Aorta (tissue), 5 donors: ENCODE measurements at regions of chr14 and their contacts with region 1.

Region 1: GRCh38 chr14:89618811-89619551 is 201.9 kb upstream of the FOXN3 start:
- DNase-seq: peak; percentile 85 to 91
- ATAC-seq: peak; percentile 85
- H3K4me3 ChIP-seq: peak overlapping the region; percentile 86 to 90
- H3K27ac ChIP-seq: peak overlapping the region in 1 of 2 donors; percentile 37
- H3K4me1 ChIP-seq: peaks cover 0 to 8% of the 10 kb centered on the region in 2 donors
- H3K27me3 ChIP-seq: no peaks in the 10 kb centered on the region

Region 2: DNA sequence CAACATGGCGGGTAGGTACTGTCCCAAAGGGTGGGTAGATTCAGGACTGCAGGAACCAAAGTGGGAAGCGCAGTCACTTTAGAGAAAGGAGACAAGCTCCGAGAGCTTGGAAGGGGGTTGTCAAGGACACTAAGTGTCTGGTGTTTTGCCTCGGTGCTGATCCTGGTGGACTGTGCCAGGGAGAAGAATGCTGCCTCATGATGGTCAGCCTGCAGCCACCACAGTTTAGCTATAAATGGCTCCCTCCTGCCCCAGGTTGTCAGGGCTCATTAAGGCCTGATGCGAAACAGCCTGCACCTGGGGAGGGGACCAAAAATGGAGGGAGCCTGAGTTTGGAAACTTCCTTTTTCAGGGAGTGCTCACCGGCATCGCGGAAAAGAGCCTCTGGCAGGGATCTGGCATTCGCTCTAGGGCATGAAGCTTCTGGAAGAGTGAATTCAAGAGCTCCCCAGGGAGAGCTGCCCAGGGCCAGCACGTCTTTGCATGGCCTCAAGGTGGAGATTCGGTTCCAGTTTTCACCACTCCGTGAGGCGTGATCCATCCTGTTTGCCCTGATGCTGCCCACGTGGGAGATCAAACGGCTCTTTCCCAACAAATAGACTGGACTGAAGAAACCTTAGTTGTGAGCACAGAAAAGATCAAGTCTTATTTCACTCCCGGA is 366.0 kb before region 1 on chr14:
- intact Hi-C with region 1: loop called in 1 of 2 experiments (anchors 10 kb)
- DNase-seq: peak; percentile 62 to 77
- ATAC-seq: peak; percentile 52
- H3K4me3 ChIP-seq: no peak overlapping the region
- H3K27ac ChIP-seq: no peak overlapping the region
- H3K4me1 ChIP-seq: peaks cover under 1 to 16% of the 10 kb centered on the region in 2 donors
- H3K27me3 ChIP-seq: no peaks in the 10 kb centered on the region

Region 3: DNA sequence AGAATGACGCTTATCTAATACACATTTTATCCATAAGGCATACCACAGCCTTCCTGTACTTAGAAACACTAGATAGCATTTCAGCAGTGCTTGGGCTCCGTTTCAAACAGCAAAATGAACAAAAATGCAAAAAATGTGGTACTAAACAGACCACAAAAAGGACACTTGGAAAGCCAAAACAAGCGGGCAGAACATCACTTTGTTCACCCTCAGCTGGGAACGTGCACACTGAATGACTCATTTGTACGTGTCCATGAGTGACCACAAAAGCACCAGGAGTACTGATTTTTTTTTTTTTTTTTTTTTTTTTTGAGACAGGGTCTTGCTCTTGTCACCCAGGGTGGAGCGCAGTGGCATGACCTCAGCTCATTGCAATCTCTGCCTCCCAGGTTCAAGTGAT is 193.1 kb before region 1 on chr14:
- intact Hi-C with region 1: loop called in 1 of 2 experiments (anchors 5 kb)
- DNase-seq: no peak
- ATAC-seq: no peak
- H3K4me3 ChIP-seq: no peak overlapping the region
- H3K27ac ChIP-seq: peak overlapping the region in 1 of 2 donors; percentile 60
- H3K4me1 ChIP-seq: no peaks in the 10 kb centered on the region
- H3K27me3 ChIP-seq: no peaks in the 10 kb centered on the region

Region 4: DNA sequence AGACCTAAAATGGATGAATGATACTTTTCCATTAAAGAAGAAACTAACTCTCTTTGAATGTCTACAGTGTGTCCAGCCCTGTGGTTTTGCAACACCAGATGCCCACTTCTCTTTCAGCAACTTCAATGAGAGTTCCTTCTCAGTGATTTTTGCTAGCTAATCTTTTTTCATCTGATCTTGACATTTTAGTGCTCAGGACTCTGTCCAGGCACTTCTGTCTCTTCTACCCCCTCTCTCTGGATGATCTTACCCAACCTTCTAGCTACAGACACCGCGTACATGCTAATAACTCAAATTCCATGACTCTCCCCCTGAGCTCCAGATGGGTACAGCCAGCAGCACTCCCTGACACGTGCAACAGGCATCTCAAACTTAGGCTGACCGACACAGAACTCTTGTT is 40.8 kb before region 1 on chr14:
- intact Hi-C with region 1: loop called in 1 of 2 experiments (anchors 5 kb)
- DNase-seq: no peak
- ATAC-seq: no peak
- H3K4me3 ChIP-seq: no peak overlapping the region
- H3K27ac ChIP-seq: peak overlapping the region in 1 of 2 donors; percentile 60
- H3K4me1 ChIP-seq: peaks cover 0 to 8% of the 10 kb centered on the region in 2 donors
- H3K27me3 ChIP-seq: no peaks in the 10 kb centered on the region

Region 5: DNA sequence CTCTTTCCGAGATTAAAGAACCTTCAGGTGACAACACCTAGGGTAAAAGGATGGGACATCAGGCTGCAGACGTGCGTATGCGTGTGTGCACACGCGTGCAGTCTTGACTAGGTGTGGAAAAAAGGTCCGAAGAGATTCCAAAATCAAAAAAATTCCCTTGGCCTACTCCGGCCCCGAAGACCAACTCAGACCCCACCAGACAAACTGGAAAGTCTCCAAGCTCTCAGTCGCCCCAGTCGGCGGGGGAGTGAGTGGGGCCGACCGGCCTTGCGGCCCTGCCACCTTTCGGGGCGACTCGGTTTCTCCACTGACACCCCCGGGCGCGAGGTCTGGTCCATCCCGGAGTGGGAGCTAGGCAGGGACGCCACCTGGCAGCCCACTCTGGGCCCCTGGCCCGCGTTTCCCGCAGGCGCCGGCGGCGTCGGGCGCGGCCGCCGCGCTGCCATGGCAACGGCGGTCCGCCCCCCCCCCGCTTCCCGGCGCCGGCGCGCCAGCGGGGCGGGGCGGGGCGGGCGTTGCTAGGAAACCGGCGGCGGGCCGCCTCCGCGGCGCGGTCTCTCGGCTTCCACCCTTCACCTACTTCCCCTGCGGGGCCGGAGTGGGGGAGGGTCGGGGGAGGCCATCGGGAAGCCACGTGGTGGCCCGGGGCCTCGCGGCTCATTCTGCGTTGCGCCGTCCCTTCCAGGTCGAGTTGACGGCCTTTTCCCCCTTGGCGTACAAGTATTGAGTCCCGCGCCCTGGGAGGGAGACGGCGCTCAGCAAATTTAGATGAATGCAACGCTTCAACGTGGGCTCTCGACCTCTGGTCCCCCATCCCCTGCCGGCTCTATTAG is 82.4 kb after region 1 on chr14:
- intact Hi-C with region 1: no loop called
- DNase-seq: peak; percentile 94 to 95
- ATAC-seq: peak; percentile 95
- H3K4me3 ChIP-seq: peak overlapping the region; percentile 5 to 11
- H3K27ac ChIP-seq: peak overlapping the region in 1 of 2 donors; percentile 31
- H3K4me1 ChIP-seq: no peaks in the 10 kb centered on the region
- H3K27me3 ChIP-seq: no peaks in the 10 kb centered on the region

Region 6: GRCh38 chr14:89813617-89814031 is 194.6 kb after region 1 on chr14:
- intact Hi-C with region 1: loop called in 1 of 2 experiments (anchors 10 kb)
- DNase-seq: peak; percentile 66 to 84
- ATAC-seq: peak; percentile 80
- H3K4me3 ChIP-seq: no peak overlapping the region
- H3K27ac ChIP-seq: peak overlapping the region; percentile 41 to 71
- H3K4me1 ChIP-seq: peaks cover 0 to 3% of the 10 kb centered on the region in 2 donors
- H3K27me3 ChIP-seq: no peaks in the 10 kb centered on the region

Region 7: GRCh38 chr14:89899917-89900663 is 281.1 kb after region 1 on chr14:
- intact Hi-C with region 1: loop called in 1 of 2 experiments (anchors 10 kb)
- DNase-seq: no peak
- ATAC-seq: no peak
- H3K4me3 ChIP-seq: no peak overlapping the region
- H3K27ac ChIP-seq: no peak overlapping the region
- H3K4me1 ChIP-seq: no peaks in the 10 kb centered on the region
- H3K27me3 ChIP-seq: no peaks in the 10 kb centered on the region